Posterior cingulate gyrus (tissue), 11 donors: ENCODE measurements at regions of chr7 and their contacts with region 1.

Region 1: DNA sequence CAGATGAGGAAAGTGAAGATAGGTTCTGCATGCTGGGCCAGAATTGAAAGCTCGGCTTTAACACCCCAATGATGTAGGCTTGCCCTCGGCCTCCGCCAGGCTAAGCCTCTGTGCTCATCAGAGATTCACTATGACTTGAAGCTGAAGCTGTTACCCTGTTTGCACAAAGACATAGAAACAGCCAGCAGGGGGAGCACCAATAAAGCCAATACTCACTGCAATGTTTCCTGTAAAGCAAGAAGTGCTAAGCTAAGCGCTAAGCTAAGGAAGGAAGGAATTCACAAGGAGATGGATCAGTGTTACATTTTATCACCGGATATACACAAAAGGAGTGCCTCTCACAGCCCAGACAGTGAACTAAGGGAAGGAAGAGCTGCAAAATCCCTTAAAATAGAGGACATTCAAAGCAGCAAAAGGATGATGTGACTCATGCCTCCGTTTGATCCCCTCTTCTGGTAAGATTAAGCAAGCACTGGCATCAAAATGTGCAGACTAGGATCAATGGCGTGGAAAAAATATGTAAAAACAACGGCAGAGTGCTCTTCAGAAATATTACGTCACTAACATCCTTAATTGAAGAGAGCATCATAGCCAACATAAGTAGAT is 153.8 kb downstream of the COBL start:
- DNase-seq: peak in 7 of 10 donors; percentile 66 to 95 (median 88)

Region 2: GRCh38 chr7:50092579-50093491 is 1070.0 kb before region 1 on chr7 and contains the start of gene ZPBP:
- intact Hi-C with region 1: loop called (anchors 5 kb)
- DNase-seq: peak in 8 of 10 donors; percentile 15 to 87 (median 38)

Region 3: GRCh38 chr7:50467817-50468610 is 694.8 kb before region 1 on chr7:
- intact Hi-C with region 1: loop called (anchors 1 kb)
- DNase-seq: peak; percentile 62 to 97 (median 83)

Region 4: DNA sequence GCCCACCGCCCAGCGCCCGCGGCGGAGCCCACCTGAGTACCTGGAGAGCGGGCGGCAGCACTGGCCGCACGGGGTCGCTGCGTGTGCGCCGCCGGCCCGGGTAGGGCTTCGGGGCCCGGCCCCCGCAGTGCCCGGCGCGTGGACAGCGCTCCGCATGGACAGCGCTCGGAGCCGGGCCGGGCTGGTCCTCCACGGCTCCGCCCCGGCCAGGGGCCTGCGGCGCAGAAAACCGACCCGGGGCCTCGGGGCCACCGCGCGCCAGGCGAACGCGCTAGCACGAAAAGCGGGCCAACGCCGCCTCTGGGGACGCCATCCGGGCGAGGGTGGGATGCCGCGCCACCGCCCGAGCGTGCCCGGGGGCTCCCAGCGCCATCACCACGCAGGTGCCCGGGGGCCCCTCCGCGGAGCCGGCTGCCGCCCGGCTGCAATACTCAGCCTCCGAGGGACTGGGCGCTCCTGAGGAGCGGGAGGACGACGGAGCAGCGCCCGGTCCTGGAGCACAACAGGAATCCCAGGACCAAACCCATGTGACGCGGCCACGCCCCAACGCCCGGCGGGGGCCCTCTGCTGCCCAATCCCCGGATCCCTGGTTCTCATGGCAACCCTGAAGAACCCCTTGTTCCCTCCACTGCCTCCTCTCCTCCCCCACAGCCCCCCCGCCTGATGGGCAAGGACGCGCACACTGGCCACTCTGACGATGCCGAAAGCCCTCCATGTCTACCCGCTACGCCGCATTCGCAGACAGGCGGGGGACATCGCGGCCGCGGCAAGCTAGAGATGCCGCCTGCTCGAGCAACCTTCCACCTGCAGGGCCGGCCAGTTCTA is 380.2 kb before region 1 on chr7 and contains the start of gene GRB10:
- intact Hi-C with region 1: loop called (anchors 5 kb)
- DNase-seq: peak; percentile 77 to 97 (median 84)

Region 5: GRCh38 chr7:51111241-51111940 is 51.4 kb before region 1 on chr7:
- intact Hi-C with region 1: no loop called
- DNase-seq: no peak

Region 6: DNA sequence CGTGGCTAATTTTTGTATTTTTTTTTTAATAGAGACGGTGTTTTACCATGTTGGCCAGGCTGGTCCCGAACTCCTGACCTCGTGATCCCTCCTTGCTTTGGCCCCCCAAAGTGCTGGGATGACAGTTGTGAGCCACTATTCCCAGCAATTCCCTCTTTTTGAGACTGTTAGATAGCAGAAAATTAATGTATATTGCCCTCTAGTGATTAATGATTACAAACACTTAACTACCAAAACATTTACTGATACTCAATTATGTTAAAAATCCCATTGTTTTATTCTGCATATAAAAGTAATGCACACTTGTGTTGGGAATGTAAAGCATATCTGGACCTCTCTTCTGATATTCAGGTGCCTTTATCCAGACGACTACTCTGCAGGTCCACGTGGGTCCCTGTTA is 195.0 kb after region 1 on chr7:
- intact Hi-C with region 1: loop called (anchors 2 kb)
- DNase-seq: no peak

Region 7: DNA sequence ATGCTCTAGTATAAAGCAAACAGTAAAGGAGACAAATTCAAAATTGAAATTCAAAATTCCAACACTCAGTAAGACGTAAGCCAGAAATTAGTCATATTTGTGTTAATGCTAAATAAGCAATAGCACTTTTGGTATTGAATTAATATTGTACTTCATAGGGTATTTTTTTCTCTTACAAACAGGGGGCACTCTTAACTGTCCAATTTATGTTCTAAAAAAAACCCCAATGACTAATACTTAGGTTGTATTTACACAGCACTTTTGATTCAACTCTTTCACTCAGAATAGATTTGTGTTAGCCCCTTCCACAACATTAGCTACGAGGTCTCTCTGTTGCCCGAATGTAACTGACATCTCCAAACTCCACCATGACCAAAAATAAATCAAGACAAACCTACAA is 438.6 kb after region 1 on chr7:
- intact Hi-C with region 1: no loop called
- DNase-seq: no peak